ENCODE measurements at regions of chr2 and their contacts with region 1.

Region 1: DNA sequence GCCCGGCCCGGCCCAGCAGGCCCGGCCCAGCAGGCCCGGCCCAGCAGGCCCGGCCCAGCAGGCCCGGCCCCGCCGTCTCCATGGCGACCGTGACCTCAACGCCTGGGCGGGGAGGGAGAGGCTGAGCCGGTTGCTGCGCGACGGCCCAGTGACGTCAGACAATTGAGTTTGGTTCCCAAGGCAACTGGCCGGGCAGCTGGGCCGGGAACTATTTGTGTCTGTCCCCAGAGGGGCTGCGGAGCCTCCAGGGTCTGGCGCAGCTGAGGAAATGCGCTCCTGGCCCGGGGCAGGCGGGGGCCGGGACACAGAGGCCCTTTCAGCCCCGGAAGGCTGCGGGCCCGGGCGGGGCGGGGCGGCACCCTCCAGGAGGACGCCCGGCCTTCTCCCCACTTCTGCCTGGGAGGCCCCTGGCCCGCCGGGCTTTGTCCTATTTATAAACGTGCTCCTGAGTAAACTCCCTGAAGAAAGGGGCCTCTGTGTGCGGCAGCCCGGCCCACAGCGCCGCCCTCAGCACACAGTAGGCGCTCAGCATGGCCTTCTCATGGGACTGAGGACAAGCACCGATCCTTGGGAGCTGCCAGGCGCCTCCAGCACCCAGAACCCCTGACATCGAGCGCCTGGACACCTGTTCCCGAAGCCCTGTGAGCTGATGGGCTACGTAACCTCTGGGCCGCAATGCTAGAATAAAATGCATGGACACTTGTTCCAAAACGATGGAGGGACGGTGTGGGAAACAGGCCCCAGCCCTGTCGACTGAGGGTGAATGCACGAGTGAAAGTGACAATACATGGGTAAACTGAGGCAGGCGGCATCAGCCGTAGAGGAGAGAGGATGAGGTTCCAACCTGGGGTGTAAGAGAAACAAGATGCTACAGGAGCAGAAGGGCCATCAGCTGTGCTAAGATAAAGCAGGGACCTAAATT is 12.3 kb downstream of the TEX44 start:
- DNase-seq: peak; percentile 99 to 100
- H3K4me3 ChIP-seq: peak overlapping the region in 1 of 3 donors; percentile 40
- H3K27ac ChIP-seq: peak overlapping the region; percentile 98 to 99 (median 99)
- H3K4me1 ChIP-seq: peaks cover 19 to 26% of the 10 kb centered on the region in 2 donors
- H3K27me3 ChIP-seq: no peaks in the 10 kb centered on the region
- CTCF ChIP-seq: peak in 1 of 6 experiments; percentile 7
- POLR2A ChIP-seq: peak; percentile 62 to 94

Region 2: DNA sequence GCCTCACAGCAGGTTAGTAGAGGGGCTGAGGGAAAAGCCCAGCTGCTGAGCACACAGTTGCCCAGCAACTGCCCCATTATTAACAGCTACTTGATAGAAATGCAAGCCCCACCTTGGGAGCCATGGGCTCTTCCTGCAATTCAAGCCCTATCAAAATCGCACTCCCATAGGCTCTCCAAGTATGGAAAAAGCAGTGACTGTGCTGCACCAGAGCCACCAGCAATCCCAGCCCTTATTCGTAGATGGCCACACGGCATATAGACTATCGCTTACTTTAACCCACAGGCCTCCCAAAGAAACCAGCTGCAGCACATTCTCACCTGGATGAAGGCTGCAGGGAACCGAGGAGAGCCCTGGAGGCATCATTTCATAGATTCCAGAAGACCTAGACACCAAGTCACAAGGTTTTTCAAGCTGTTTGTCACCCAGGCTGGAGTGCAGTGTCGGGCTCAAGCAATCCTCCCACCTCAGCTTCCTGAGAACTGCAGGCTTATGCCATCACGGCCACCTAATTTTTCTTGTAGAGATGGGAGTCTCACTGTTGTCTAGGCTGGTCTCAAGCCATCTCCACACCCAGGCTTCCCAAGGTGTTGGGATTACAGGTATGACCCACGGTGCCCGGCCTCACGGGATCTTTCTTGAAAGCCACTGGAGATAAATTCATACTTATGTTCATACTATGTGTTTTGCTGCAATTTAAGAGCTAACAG is 152.0 kb before region 1 on chr2:
- intact Hi-C with region 1: no loop called
- DNase-seq: no peak
- H3K4me3 ChIP-seq: no peak overlapping the region
- H3K27ac ChIP-seq: no peak overlapping the region
- H3K4me1 ChIP-seq: no peaks in the 10 kb centered on the region
- H3K27me3 ChIP-seq: no peaks in the 10 kb centered on the region
- CTCF ChIP-seq: no peak
- POLR2A ChIP-seq: no peak

Region 3: DNA sequence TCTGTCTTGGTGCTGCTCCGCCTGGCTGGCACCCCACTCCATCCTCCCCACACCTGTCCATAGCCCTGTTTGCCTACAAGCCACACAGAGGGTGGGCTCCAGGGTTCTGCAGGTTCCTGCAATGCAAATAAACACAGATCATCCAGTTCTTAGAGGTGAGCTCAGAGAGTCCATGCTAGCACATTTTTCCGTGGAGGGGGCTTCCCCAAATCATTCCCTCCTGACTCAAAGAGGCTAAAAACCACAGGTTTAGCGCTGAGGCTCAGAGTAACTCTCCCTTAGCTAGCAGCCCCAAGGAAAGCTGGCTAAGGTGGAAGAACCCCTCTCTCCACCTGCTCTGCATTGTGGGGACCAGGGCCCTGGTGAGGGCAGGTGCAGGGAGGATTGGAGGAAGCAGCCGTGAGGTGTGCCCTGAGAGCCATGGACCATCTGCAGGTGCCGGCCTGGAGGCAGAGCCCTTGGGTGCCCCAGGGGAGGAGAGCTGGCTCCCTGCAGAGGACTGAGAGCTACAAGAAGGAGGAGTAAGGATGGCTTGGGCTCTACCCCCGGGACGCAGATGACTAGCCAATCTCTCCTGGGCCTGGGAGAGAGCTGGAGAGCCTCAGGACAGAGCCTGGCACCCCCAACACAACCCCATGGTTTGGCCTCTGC is 36.0 kb before region 1 on chr2:
- intact Hi-C with region 1: loop called (anchors 5 kb)
- DNase-seq: no peak
- H3K4me3 ChIP-seq: no peak overlapping the region
- H3K27ac ChIP-seq: no peak overlapping the region
- H3K4me1 ChIP-seq: no peaks in the 10 kb centered on the region
- H3K27me3 ChIP-seq: no peaks in the 10 kb centered on the region
- CTCF ChIP-seq: no peak
- POLR2A ChIP-seq: no peak

Region 4: GRCh38 chr2:231765496-231765929 is 160.6 kb after region 1 on chr2:
- intact Hi-C with region 1: no loop called
- DNase-seq: no peak
- H3K4me3 ChIP-seq: no peak overlapping the region
- H3K27ac ChIP-seq: no peak overlapping the region
- H3K4me1 ChIP-seq: no peaks in the 10 kb centered on the region
- H3K27me3 ChIP-seq: no peaks in the 10 kb centered on the region
- CTCF ChIP-seq: no peak
- POLR2A ChIP-seq: no peak

Region 5: GRCh38 chr2:231821908-231822307 is 217.0 kb after region 1 on chr2:
- intact Hi-C with region 1: no loop called
- DNase-seq: no peak
- H3K4me3 ChIP-seq: no peak overlapping the region
- H3K27ac ChIP-seq: no peak overlapping the region
- H3K4me1 ChIP-seq: no peaks in the 10 kb centered on the region
- H3K27me3 ChIP-seq: no peaks in the 10 kb centered on the region
- CTCF ChIP-seq: no peak
- POLR2A ChIP-seq: no peak